HepG2 (cell line): ENCODE measurements at regions of chr17 and their contacts with region 1.

Region 1: GRCh38 chr17:47776330-47777197 is 43.5 kb downstream of the TBX21 start:
- DNase-seq: peak; percentile 47
- ATAC-seq: peak; percentile 86
- H3K4me3 ChIP-seq: no peak overlapping the region
- H3K27ac ChIP-seq: no peak overlapping the region
- H3K4me1 ChIP-seq: no peaks in the 10 kb centered on the region
- H3K27me3 ChIP-seq: peaks cover 4 to 47% of the 10 kb centered on the region in 2 experiments; a peak in 3 of 5 replicates
- CTCF ChIP-seq: peak; percentile 76
- EP300 ChIP-seq: no peak
- POLR2A ChIP-seq: no peak
- RAD21 ChIP-seq: peak; percentile 51; the same call in 1 of the 2 replicates

Region 2: GRCh38 chr17:47413872-47414271 is 362.7 kb before region 1 on chr17:
- CTCF ChIA-PET with region 1: no interaction called
- POLR2A ChIA-PET with region 1: no interaction called
- in situ Hi-C with region 1: no loop called
- intact Hi-C with region 1: no loop called
- DNase-seq: no peak
- ATAC-seq: no peak
- H3K4me3 ChIP-seq: no peak overlapping the region
- H3K27ac ChIP-seq: no peak overlapping the region
- H3K4me1 ChIP-seq: no peaks in the 10 kb centered on the region
- H3K27me3 ChIP-seq: no peaks in the 10 kb centered on the region
- CTCF ChIP-seq: no peak
- EP300 ChIP-seq: no peak
- POLR2A ChIP-seq: no peak
- RAD21 ChIP-seq: no peak

Region 3: DNA sequence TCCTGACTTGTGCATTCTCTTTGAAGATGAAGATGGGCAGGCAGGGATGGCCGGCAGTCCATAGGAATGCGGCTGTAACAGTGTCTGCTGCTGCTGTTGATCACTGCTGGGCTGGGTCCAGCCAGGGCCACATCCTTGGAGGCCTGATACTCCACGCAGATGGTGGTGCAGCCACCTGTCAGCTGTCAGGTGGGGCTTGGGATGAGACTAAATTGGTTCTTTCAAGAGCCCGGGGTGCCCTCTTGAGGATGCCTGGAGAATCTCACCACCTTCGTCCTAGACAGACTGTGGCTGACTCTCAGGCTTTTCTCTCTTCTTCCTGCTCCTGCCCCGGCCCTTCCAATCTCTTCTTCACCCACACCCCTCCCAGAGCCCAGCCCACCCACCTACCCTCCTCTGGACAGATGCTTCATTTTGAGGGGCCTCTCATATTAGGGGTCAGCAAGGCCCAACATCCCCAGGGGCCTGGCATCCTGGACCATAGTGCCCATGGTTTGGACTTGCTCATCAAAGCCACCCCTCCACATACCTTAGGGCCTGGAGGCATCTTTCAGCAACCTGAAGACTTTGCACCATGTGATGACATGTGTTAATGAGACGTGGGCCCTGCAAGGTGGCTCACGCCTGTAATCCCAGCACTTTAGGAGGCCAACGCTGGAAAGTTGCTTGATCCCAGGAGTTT is 25.9 kb after region 1 on chr17:
- CTCF ChIA-PET with region 1: interaction called, 15 read pairs
- POLR2A ChIA-PET with region 1: no interaction called
- in situ Hi-C with region 1: no loop called
- intact Hi-C with region 1: loop called (anchors 1 kb)
- DNase-seq: peak; percentile 67
- ATAC-seq: peak; percentile 93
- H3K4me3 ChIP-seq: no peak overlapping the region
- H3K27ac ChIP-seq: no peak overlapping the region
- H3K4me1 ChIP-seq: no peaks in the 10 kb centered on the region
- H3K27me3 ChIP-seq: peaks cover 4 to 16% of the 10 kb centered on the region in 2 experiments; a peak in 3 of 5 replicates
- CTCF ChIP-seq: peak; percentile 80
- EP300 ChIP-seq: no peak
- POLR2A ChIP-seq: no peak
- RAD21 ChIP-seq: peak; percentile 77

Region 4: GRCh38 chr17:47889734-47890529 is 113.4 kb after region 1 on chr17:
- CTCF ChIA-PET with region 1: interaction called, 10 read pairs
- POLR2A ChIA-PET with region 1: no interaction called
- in situ Hi-C with region 1: no loop called
- intact Hi-C with region 1: loop called (anchors 1 kb)
- DNase-seq: peak; percentile 81
- ATAC-seq: peak; percentile 93
- H3K4me3 ChIP-seq: no peak overlapping the region
- H3K27ac ChIP-seq: no peak overlapping the region
- H3K4me1 ChIP-seq: peaks cover 28% of the 10 kb centered on the region
- H3K27me3 ChIP-seq: peaks cover 1 to 10% of the 10 kb centered on the region in 2 experiments; a peak in 4 of 5 replicates
- CTCF ChIP-seq: peak; percentile 99
- EP300 ChIP-seq: no peak
- POLR2A ChIP-seq: no peak
- RAD21 ChIP-seq: peak; percentile 98